ENCODE measurements at regions of chr22 and their contacts with region 1.

Region 1: DNA sequence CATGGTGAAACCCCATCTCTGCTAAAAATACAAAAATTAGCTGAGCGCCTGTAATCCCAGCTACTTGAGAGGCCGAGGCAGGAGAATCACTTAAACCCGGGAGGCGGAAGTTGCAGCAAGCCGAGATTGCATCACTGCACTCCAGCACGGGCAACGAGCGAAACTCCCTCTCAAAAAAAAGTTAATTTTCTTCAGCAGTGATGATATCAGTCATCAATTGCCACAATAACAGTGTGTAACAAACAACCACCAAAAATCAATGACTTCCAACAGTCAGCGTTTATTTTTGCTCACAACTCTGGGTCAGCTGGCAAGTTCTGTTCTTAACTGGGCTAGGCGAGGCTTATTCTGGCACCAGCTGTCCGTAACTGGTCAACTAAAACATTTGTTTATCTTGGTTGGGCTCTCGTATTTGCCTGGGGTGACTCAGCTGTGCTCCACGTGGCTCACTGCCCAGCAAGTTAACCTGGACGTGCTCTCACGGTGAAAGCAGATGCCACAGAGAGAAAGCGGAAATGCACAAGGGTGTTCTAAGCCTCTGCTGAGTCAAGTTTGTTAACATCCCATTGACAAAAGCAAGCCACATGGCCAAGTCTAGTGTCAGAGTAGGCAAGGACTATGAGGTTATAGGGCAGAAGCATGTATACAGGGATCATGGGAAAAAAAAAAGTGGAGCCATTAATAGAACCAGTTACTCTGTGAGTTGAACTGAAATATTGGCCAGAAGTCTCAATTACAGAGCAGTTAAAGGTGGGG is 52.1 kb downstream of the LHFPL7 start:
- DNase-seq: peak; percentile 95
- ATAC-seq: peak; percentile 95
- H3K4me3 ChIP-seq: peak overlapping the region in 1 of 2 experiments; percentile 35; a peak in 2 of 4 replicates
- H3K27ac ChIP-seq: peak overlapping the region; percentile 93
- H3K4me1 ChIP-seq: peaks cover 29% of the 10 kb centered on the region
- H3K27me3 ChIP-seq: no peaks in the 10 kb centered on the region
- CTCF ChIP-seq: no peak

Region 2: DNA sequence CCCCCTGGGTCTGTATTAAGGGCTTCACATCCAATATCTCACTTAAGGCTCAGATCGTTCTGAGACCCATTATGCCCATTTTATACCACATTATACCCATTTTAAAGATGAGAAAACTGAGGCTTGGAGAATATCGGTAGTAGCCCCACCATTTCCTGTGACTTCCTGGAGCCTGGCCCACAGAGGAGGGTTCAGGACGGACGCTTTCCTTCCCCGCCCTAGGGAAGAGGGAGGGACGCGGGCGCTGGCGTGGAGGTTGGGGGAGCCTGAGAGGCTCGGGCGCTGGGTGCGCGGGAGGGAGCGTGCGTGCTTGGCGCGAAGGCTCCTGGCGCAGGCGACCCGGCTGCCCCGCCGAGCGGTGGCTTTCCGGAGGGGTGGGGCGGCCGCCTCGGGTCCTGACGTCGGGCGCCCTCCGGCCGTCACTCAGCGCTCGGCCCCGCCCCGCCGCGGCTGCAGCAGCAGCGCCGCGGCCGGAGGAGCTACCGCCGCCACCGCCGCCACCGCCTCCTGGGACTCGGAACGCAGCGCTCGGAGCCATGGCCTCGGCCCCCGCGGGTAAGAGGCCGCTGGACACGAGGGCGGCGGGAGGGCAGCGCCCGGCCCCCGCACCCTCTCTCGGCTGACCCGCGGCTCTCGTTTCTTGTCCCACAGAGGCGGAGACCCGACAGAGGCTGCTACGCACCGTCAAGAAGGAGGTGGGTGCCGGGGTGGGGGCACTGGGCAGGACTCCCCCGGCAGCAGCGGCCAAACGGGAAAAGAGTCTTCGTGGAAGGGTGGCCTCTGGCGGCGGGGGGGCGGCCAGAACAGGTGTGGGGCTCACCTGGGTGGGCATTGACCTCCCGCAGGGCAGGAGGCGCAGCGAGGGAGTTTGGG is 88.4 kb before region 1 on chr22 and contains the start of gene SGSM1:
- CTCF ChIA-PET with region 1: no interaction called
- POLR2A ChIA-PET with region 1: interaction called, 19 read pairs
- in situ Hi-C with region 1: no loop called
- intact Hi-C with region 1: no loop called
- DNase-seq: no peak
- ATAC-seq: peak; percentile 96
- H3K4me3 ChIP-seq: peak within 1 kb of the TSS; percentile 54 to 64
- H3K27ac ChIP-seq: 0 out of 2 replicates have a peak within 1 kb of the TSS, but pooled peaks have one; percentile 46
- H3K4me1 ChIP-seq: no peaks in the 10 kb centered on the region
- H3K27me3 ChIP-seq: no peaks in the 10 kb centered on the region
- CTCF ChIP-seq: no peak
- total RNA-seq, gene SGSM1: 1.6 TPM

Measured in Panc1 (cell line).